ENCODE measurements at regions of chr3 and their contacts with region 1.

Region 1: DNA sequence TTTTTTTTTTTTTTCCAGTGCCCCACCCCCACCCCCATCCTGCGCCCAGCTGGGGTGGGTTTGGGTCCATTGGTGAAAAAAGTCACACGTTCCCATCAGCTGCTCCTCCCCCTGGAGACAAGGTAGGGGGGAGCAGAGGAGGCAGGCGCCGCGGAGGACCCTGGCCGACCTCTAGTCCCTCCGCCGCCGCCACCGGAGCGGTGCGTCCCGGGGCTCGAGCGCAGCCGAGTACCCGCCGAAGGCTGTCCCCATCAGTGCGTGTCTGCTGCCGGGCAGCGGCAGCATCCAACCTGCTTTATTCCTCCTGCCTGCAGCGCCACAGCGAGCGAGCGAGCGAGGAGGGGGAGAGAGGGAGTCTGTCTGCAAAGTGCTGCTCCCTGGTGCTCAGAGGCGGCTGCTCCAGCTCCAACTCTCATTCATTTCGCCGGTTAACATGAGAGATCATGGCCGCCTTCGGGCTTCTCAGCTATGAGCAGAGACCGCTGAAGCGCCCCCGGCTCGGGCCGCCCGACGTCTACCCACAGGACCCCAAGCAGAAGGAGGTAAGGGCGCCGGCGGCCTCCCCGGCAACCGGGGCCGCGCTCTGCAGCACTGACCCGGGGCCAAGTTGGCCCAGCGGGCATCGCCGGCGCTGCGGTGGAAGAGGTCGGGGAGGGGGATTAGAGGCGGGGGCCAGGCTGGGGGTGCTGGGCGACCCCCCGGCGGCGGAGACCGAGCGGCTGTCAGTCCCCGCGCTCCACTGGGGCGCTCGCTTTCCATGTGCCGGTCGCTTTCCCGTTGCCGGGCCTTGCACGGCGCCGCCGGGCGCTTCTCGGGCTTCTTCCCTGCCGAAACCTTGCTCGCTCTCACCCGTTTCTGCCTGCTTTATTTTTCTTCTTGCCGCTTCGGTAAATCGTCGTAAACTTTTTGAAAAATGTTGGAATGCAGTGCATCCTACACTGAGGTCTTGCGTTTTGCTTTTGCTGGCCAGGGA is 1.3 kb downstream of the MED12L start:
- DNase-seq: peak; percentile 83 to 88
- ATAC-seq: peak; percentile 88 to 93
- H3K4me3 ChIP-seq: peak overlapping the region; percentile 70
- H3K27ac ChIP-seq: peak overlapping the region; percentile 43 to 81; a peak in 5 of 6 replicates
- H3K4me1 ChIP-seq: no peaks in the 10 kb centered on the region
- CTCF ChIP-seq: peak; percentile 46
- EP300 ChIP-seq: no peak
- POLR2A ChIP-seq: no peak
- RAD21 ChIP-seq: peak; percentile 31 to 46; a peak in 3 of 5 replicates

Region 2: DNA sequence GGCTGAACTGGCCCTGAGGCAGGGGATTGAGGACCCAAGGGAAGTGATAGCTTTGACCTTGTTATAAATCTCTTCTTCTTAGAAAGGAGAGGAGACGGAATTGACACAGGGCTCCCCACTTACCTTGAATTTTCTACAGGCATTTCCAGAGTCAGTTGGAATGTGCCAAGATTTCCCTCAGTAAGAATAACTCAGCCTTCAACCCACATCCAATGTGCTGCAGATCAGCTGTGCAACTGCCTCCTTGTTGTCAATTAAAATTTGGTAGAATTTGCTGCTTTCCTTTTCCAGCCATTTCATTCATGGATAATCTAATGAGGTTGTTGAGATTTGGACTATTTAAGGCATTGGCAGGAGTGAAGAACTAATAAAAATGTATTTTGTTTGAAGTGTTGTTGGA is 13.3 kb after region 1 on chr3:
- CTCF ChIA-PET with region 1: interaction called, 12 read pairs
- POLR2A ChIA-PET with region 1: no interaction called
- DNase-seq: no peak
- ATAC-seq: no peak
- H3K4me3 ChIP-seq: no peak overlapping the region
- H3K27ac ChIP-seq: no peak overlapping the region
- H3K4me1 ChIP-seq: no peaks in the 10 kb centered on the region
- CTCF ChIP-seq: no peak
- EP300 ChIP-seq: no peak
- POLR2A ChIP-seq: no peak
- RAD21 ChIP-seq: no peak